Activated CD4-positive, alpha-beta memory T cell treated with anti-CD3 and anti-CD28 coated beads for 36 hours (primary cell): ENCODE measurements at regions of chr6 and their contacts with region 1.

Region 1: GRCh38 chr6:27280064-27280539 is 32.0 kb downstream of the POM121L2 start:
- DNase-seq: peak; percentile 30
- H3K4me3 Mint-ChIP-seq: peak overlapping the region; percentile 45
- H3K27ac Mint-ChIP-seq: no peak overlapping the region
- H3K4me1 Mint-ChIP-seq: peaks cover 6% of the 10 kb centered on the region
- H3K27me3 Mint-ChIP-seq: peaks cover 67% of the 10 kb centered on the region

Region 2: GRCh38 chr6:27237089-27237803 is 42.9 kb before region 1 on chr6:
- CTCF ChIA-PET with region 1: no interaction called
- POLR2A ChIA-PET with region 1: no interaction called
- intact Hi-C with region 1: loop called (anchors 2 kb)
- DNase-seq: peak; percentile 70
- H3K4me3 Mint-ChIP-seq: peak overlapping the region; percentile 44
- H3K27ac Mint-ChIP-seq: no peak overlapping the region
- H3K4me1 Mint-ChIP-seq: peaks cover 16% of the 10 kb centered on the region
- H3K27me3 Mint-ChIP-seq: peaks cover 61% of the 10 kb centered on the region